Activated CD4-positive, alpha-beta memory T cell treated with anti-CD3 and anti-CD28 coated beads, Interleukin-2, amount 10 ng/mL, durations not matched to agents 7 days and 5 days (primary cell): ENCODE measurements at regions of chr7 and their contacts with region 1.

Region 1: DNA sequence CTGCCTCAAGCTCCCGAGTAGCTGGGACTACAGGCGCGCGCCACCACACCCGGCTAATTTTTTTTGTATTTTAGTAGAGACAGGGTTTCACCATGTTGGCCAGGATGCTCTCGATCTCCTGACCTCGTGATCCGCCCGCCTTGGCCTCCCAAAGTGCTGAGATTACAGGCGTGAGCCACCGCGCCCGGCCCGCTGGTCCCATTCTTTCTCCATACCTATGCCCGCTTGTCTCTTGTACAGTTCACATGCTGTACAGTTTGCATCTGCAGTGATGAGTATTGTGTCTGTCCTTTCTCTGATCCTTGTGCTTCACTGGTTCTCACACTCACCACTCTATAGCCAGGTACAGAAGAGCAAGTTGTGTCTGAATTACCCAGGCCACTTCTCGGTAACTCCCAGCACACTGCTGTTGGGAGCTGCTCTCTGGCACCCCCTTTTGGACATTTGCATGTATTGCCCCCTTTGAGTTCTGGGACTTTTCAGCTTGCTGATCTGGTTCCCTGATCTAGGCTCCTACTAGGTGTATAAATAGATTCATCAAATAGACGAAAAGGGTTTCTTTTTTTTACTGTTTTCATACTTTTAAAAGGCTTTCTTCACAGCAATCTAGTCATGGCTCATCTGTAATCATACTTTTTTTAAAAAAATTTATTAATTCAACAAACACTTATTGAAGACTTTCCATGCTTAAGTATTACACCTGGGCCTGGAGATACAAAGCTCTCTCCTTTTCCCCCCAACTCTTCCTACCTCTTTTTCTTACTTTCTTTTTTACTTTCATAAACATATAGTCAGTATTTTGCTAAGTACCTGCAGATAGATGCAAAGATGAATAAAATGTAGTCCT is 53.5 kb downstream of the AOAH start:
- DNase-seq: peak; percentile 75
- H3K4me3 Mint-ChIP-seq: no peak overlapping the region
- H3K27ac Mint-ChIP-seq: no peak overlapping the region
- H3K4me1 Mint-ChIP-seq: peaks cover 35% of the 10 kb centered on the region
- H3K27me3 Mint-ChIP-seq: no peaks in the 10 kb centered on the region

Region 2: DNA sequence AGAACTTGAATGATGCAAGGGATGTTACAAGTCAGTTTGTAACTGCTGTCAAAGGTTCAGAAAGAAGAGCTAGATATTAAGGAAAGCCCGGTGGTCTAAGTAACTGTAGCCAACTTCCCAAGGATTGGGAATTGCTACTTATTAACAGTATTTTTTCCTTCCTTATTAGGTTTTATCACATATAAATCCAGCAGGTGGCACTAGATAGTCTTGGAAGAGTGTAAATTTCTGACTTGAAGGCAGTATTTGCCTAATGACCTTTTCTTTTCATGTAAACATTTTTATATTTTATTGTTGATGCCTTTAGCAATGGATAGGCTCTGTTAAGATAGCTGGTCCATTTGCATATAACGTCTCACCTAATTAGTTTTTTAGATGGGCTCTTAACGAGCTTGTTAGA is 229.9 kb before region 1 on chr7:
- CTCF ChIA-PET with region 1: interaction called, 10 read pairs
- POLR2A ChIA-PET with region 1: no interaction called
- DNase-seq: no peak
- H3K4me3 Mint-ChIP-seq: no peak overlapping the region
- H3K27ac Mint-ChIP-seq: no peak overlapping the region
- H3K4me1 Mint-ChIP-seq: no peaks in the 10 kb centered on the region
- H3K27me3 Mint-ChIP-seq: no peaks in the 10 kb centered on the region

Region 3: DNA sequence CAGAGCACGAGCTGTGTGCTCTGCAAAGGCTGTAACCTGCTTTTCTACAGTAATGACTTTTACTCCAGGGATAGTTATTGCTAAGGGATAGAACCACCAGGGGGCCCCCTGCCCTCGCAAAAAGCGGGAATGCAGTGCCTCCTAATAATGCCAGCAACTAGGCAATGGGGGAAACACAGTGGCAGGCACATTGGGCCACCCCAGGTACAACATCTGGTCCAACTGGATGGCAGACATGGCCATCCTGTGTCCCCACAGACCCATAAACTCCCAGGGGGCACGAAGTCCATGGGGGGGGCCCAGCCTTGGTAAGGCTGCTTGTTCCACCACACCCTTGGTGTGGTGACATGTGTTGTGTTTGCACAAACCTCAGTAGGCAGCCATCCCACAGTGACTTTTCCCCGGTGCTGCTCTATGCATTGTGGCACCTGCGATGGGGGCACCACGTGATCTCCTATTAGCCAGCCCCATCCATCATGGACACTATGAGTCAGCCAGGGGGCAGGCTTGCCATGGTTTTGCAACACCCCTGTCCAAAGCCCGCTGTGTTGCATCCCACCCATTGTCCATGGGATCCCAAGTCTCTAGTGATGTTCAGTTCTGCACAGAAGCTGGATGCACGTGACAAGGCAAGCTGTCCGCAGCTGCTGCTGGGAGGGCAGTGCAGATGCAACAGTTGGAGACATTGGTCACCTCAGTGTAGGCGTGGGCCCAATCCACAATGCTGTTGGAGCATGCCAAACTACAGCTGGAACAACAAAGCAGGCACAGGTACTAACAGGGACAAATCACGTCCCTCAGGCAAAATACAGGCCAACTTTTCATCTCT is 197.1 kb before region 1 on chr7:
- CTCF ChIA-PET with region 1: interaction called, 13 read pairs
- POLR2A ChIA-PET with region 1: no interaction called
- DNase-seq: peak; percentile 48
- H3K4me3 Mint-ChIP-seq: no peak overlapping the region
- H3K27ac Mint-ChIP-seq: no peak overlapping the region
- H3K4me1 Mint-ChIP-seq: peaks cover 24% of the 10 kb centered on the region
- H3K27me3 Mint-ChIP-seq: no peaks in the 10 kb centered on the region

Region 4: GRCh38 chr7:36487756-36488336 is 183.0 kb before region 1 on chr7:
- CTCF ChIA-PET with region 1: interaction called, 58 read pairs
- POLR2A ChIA-PET with region 1: interaction called, 3 read pairs
- DNase-seq: peak; percentile 41
- H3K4me3 Mint-ChIP-seq: no peak overlapping the region
- H3K27ac Mint-ChIP-seq: no peak overlapping the region
- H3K4me1 Mint-ChIP-seq: peaks cover 1% of the 10 kb centered on the region
- H3K27me3 Mint-ChIP-seq: peaks cover 2% of the 10 kb centered on the region

Region 5: GRCh38 chr7:36639826-36640225 is 31.0 kb before region 1 on chr7:
- CTCF ChIA-PET with region 1: interaction called, 26 read pairs
- POLR2A ChIA-PET with region 1: interaction called, 5 read pairs
- DNase-seq: peak; percentile 76
- H3K4me3 Mint-ChIP-seq: peak overlapping the region; percentile 30
- H3K27ac Mint-ChIP-seq: peak overlapping the region; percentile 94
- H3K4me1 Mint-ChIP-seq: peaks cover 50% of the 10 kb centered on the region
- H3K27me3 Mint-ChIP-seq: no peaks in the 10 kb centered on the region

Region 6: GRCh38 chr7:36765605-36766004 is 94.8 kb after region 1 on chr7:
- CTCF ChIA-PET with region 1: no interaction called
- POLR2A ChIA-PET with region 1: no interaction called
- DNase-seq: no peak
- H3K4me3 Mint-ChIP-seq: no peak overlapping the region
- H3K27ac Mint-ChIP-seq: no peak overlapping the region
- H3K4me1 Mint-ChIP-seq: peaks cover 13% of the 10 kb centered on the region
- H3K27me3 Mint-ChIP-seq: peaks cover 2% of the 10 kb centered on the region

Region 7: GRCh38 chr7:36863901-36864701 is 193.3 kb after region 1 on chr7:
- CTCF ChIA-PET with region 1: no interaction called
- POLR2A ChIA-PET with region 1: no interaction called
- DNase-seq: peak; percentile 28
- H3K4me3 Mint-ChIP-seq: no peak overlapping the region
- H3K27ac Mint-ChIP-seq: peak overlapping the region; percentile 74
- H3K4me1 Mint-ChIP-seq: peaks cover 35% of the 10 kb centered on the region
- H3K27me3 Mint-ChIP-seq: no peaks in the 10 kb centered on the region